ENCODE measurements at regions of chr10 and their contacts with region 1.

Region 1: DNA sequence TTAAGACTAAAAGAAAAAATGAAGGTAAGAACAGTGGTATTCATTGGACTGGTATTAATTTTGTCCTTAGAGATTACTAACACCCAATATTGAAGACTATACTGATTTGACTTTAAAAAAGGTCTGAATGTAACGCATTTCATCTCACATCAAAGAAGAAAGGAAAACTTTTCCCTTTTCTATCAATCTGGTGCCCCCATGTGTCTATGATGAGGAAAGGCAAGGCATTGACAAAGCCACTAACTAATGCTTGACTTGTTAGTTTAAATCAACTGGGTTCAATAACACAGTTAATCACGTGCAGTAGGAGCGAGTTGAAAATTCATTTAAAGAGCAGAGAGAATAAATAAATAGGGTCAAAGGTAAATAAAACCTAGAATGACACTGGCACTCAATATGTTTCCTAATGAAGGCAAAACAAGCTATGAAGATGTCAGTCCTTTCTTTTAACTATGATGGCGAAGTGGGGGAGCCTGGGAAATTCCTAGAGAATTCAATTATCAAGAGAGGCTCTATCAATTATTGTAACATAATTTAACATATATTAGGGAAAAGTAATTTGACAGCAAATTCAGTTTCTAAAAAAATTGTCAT is 180.9 kb downstream of the ANK3 start:
- DNase-seq: no peak
- CTCF ChIP-seq: peak; percentile 56

Region 2: DNA sequence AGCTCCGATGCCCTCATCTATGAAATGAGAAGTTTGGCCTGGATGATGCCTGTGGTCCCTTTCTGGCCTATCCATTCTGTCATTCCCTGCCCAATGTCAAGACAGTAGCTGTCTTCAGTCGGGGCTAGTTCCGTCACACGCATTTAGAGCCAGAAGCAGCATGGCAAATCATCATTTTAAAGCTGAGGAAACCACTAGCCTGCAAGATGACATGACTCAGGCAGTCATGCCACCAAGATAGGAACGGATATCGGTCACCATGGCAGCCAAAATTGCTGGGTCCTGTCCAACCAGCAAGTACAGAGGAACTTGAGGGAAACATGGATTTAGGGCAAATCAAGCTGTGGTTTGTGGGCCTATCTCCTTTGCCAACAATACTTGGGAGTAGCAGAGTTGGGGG is 391.0 kb before region 1 on chr10:
- CTCF ChIA-PET with region 1: no interaction called
- POLR2A ChIA-PET with region 1: no interaction called
- DNase-seq: no peak
- CTCF ChIP-seq: no peak

Region 3: DNA sequence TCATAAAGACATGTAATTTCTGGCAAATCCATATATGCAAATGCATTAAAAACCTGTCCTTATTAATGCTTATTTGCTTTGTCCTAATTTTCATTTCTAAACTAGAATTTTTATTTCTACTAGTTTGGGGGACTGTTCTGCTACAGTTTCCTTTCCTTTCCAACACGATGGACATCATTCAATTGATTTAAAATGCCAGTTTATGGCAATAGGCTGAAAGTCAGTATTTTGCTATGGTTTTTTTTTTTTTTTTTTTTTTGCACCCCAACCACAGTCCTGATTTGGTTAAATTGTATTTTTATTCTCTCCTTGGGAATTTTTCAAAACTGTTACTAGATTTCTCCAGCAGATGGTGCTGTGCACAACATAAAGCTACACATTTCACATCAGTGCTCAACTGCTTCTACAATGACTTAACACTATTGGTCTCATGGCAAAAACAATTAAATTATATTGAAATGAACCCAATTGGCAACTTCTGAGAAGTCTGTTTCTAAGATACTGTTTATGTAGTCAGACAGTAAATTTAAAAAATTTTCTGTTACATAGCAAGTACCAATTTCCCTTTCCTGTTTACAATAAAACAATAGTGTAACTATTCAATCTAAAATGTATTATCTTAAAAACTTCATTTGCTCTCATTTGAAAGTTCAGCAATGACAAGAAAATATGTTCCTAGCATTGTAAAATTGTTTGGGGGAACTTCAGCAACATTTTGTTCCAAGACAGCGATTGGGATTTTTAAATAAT is 108.6 kb before region 1 on chr10:
- CTCF ChIA-PET with region 1: interaction called, 24 read pairs
- POLR2A ChIA-PET with region 1: no interaction called
- DNase-seq: peak; percentile 24
- CTCF ChIP-seq: peak; percentile 56

Region 4: GRCh38 chr10:60114765-60115586 is 93.8 kb before region 1 on chr10:
- CTCF ChIA-PET with region 1: interaction called, 16 read pairs
- POLR2A ChIA-PET with region 1: no interaction called
- DNase-seq: peak; percentile 32
- CTCF ChIP-seq: peak; percentile 35

Region 5: GRCh38 chr10:60197206-60197605 is 11.6 kb before region 1 on chr10:
- CTCF ChIA-PET with region 1: interaction called, 19 read pairs
- POLR2A ChIA-PET with region 1: no interaction called
- DNase-seq: no peak
- CTCF ChIP-seq: no peak

Measured in GM10248 (cell line).